Left lung (tissue), 14 donors: ENCODE measurements at regions of chr15 and their contacts with region 1.

Region 1: GRCh38 chr15:85625856-85626255 is 168.9 kb downstream of the KLHL25 start:
- DNase-seq: peak in 1 of 4 donors; percentile 82
- ATAC-seq: peak; percentile 28
- H3K4me3 ChIP-seq: no peak overlapping the region
- H3K27ac ChIP-seq: peak overlapping the region; percentile 71 to 88
- H3K4me1 ChIP-seq: peaks cover 34 to 90% of the 10 kb centered on the region in 2 donors
- H3K27me3 ChIP-seq: no peaks in the 10 kb centered on the region
- CTCF ChIP-seq: no peak

Region 2: GRCh38 chr15:85312486-85312885 is 313.4 kb before region 1 on chr15:
- intact Hi-C with region 1: no loop called
- DNase-seq: no peak
- ATAC-seq: peak; percentile 25
- H3K4me3 ChIP-seq: no peak overlapping the region
- H3K27ac ChIP-seq: peak overlapping the region in 1 of 2 donors; percentile 25
- H3K4me1 ChIP-seq: peaks cover 0 to 10% of the 10 kb centered on the region in 2 donors
- H3K27me3 ChIP-seq: no peaks in the 10 kb centered on the region
- CTCF ChIP-seq: no peak

Region 3: GRCh38 chr15:85554852-85555521 is 70.9 kb before region 1 on chr15:
- intact Hi-C with region 1: no loop called
- DNase-seq: no peak
- ATAC-seq: peak; percentile 6
- H3K4me3 ChIP-seq: peak overlapping the region in 1 of 2 donors; percentile 17
- H3K27ac ChIP-seq: peak overlapping the region; percentile 41 to 80
- H3K4me1 ChIP-seq: peaks cover 20 to 92% of the 10 kb centered on the region in 2 donors
- H3K27me3 ChIP-seq: no peaks in the 10 kb centered on the region
- CTCF ChIP-seq: no peak

Region 4: GRCh38 chr15:85707519-85708338 is 81.9 kb after region 1 on chr15:
- intact Hi-C with region 1: loop called in 1 of 2 experiments (anchors 10 kb)
- DNase-seq: peak in 1 of 4 donors; percentile 59
- ATAC-seq: peak; percentile 52
- H3K4me3 ChIP-seq: no peak overlapping the region
- H3K27ac ChIP-seq: peak overlapping the region; percentile 77 to 93
- H3K4me1 ChIP-seq: peaks cover 34 to 67% of the 10 kb centered on the region in 2 donors
- H3K27me3 ChIP-seq: no peaks in the 10 kb centered on the region
- CTCF ChIP-seq: no peak